ENCODE measurements at regions of chr12 and their contacts with region 1.

Region 1: GRCh38 chr12:123141615-123142517 is 9.0 kb downstream of the PITPNM2 start:
- DNase-seq: peak; percentile 75 to 80 (median 79)
- ATAC-seq: peak; percentile 79 to 86 (median 84)
- H3K4me3 ChIP-seq: peak overlapping the region in 2 of 3 donors; percentile 14 to 16
- H3K27ac ChIP-seq: peak overlapping the region; percentile 75 to 80 (median 78)
- H3K4me1 ChIP-seq: peaks cover 3 to 45% (median 27%) of the 10 kb centered on the region in 4 donors
- H3K27me3 ChIP-seq: no peaks in the 10 kb centered on the region
- CTCF ChIP-seq: no peak
- POLR2A ChIP-seq: peak; percentile 32

Region 2: GRCh38 chr12:123050331-123050831 is 91.5 kb before region 1 on chr12:
- intact Hi-C with region 1: loop called in 1 of 2 experiments (anchors 10 kb)
- DNase-seq: peak; percentile 41 to 88 (median 81)
- ATAC-seq: peak; percentile 77 to 95 (median 91)
- H3K4me3 ChIP-seq: no peak overlapping the region
- H3K27ac ChIP-seq: peak overlapping the region in 1 of 3 donors; percentile 42
- H3K4me1 ChIP-seq: peaks cover 0 to 33% (median 13%) of the 10 kb centered on the region in 4 donors
- H3K27me3 ChIP-seq: no peaks in the 10 kb centered on the region
- CTCF ChIP-seq: no peak
- POLR2A ChIP-seq: no peak

Region 3: GRCh38 chr12:123062681-123063486 is 79.0 kb before region 1 on chr12:
- intact Hi-C with region 1: loop called (anchors 10 kb)
- DNase-seq: peak; percentile 46 to 82 (median 70)
- ATAC-seq: peak; percentile 53 to 74 (median 66)
- H3K4me3 ChIP-seq: no peak overlapping the region
- H3K27ac ChIP-seq: peak overlapping the region; percentile 63 to 78 (median 76)
- H3K4me1 ChIP-seq: peaks cover 3 to 61% (median 30%) of the 10 kb centered on the region in 4 donors
- H3K27me3 ChIP-seq: no peaks in the 10 kb centered on the region
- CTCF ChIP-seq: no peak
- POLR2A ChIP-seq: no peak

Region 4: GRCh38 chr12:123094349-123095074 is 47.4 kb before region 1 on chr12:
- intact Hi-C with region 1: loop called in 1 of 2 experiments (anchors 5 kb)
- DNase-seq: peak in 1 of 3 donors; percentile 62
- ATAC-seq: peak; percentile 28 to 64 (median 53)
- H3K4me3 ChIP-seq: no peak overlapping the region
- H3K27ac ChIP-seq: peak overlapping the region in 1 of 3 donors; percentile 21
- H3K4me1 ChIP-seq: peaks cover 0 to 57% (median 30%) of the 10 kb centered on the region in 4 donors
- H3K27me3 ChIP-seq: no peaks in the 10 kb centered on the region
- CTCF ChIP-seq: no peak
- POLR2A ChIP-seq: no peak

Measured in right lobe of liver (tissue), 6 donors.